Tibial artery (tissue), 4 donors: ENCODE measurements at regions of chr1 and their contacts with region 1.

Region 1: GRCh38 chr1:37556712-37557196 is at the start of gene DNALI1:
- DNase-seq: peak; percentile 76 to 92
- H3K4me3 ChIP-seq: peak within 1 kb of the TSS; percentile 41 to 45
- H3K27ac ChIP-seq: peak within 1 kb of the TSS; percentile 43 to 65
- H3K4me1 ChIP-seq: peaks cover 0 to 35% (median 23%) of the 10 kb centered on the region in 4 donors
- H3K27me3 ChIP-seq: no peaks in the 10 kb centered on the region
- CTCF ChIP-seq: no peak

Region 2: DNA sequence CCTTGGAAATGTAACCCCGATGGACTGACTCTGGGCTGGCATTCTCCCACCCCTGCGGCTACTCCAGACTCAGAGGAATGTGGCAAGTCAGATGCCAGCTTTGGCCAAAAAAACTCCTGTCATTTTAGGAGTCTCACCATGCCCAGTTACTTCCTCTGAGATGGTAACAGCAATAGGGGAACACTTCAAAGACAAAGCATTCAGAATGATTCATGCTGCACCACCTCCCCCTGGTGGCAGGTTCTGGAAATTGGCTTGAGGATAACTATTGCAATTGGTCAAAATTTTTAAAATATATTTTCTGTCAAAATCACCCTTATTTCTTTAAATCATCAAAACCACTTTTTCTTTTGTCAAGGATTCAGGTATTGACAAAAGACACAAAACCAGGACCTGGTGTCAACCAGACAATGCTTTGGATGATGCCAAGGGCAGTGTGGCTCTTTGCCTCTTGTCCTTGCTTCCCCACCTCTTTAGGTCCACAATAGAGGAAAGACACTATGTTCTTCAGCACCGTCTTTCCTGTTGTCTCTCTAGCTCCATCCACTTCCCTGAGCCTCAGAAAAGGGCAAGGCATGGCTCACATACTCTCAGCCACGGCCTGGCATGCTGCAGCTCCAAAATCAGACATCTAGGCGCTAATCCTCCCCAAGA is 125.7 kb after region 1 on chr1:
- intact Hi-C with region 1: loop called (anchors 5 kb)
- DNase-seq: peak; percentile 74 to 81
- H3K4me3 ChIP-seq: no peak overlapping the region
- H3K27ac ChIP-seq: peak overlapping the region in 1 of 2 donors; percentile 32
- H3K4me1 ChIP-seq: no peaks in the 10 kb centered on the region
- H3K27me3 ChIP-seq: no peaks in the 10 kb centered on the region
- CTCF ChIP-seq: peak; percentile 85 to 88